ENCODE measurements at regions of chr4 and their contacts with region 1.

Region 1: GRCh38 chr4:48141048-48141447 is 7.0 kb upstream of the TXK start:
- DNase-seq: no peak
- ATAC-seq: peak; percentile 56
- H3K4me3 Mint-ChIP-seq: no peak overlapping the region
- H3K27ac Mint-ChIP-seq: no peak overlapping the region
- H3K4me1 Mint-ChIP-seq: peaks cover 28% of the 10 kb centered on the region
- H3K27me3 Mint-ChIP-seq: no peaks in the 10 kb centered on the region
- CTCF ChIP-seq: peak; percentile 68

Region 2: DNA sequence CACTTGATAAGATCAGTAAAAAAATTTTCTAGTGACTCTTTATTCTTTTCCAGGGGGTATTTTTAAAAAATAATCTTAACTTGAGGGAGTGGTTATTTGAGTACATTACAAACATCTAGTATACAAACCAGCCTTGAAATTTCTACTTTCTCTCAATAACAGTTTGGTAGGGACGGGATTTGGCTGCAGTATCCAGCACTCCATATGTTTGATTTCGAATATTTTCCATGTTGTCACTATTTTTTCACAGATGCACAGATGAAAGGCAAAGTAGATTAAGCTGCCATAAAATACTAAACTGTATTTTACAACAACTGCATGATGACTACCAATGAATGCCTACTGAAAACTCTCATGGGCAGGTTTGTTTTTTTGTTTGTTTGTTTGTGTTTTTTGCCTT is 1457.0 kb before region 1 on chr4:
- CTCF ChIA-PET with region 1: no interaction called
- POLR2A ChIA-PET with region 1: no interaction called
- intact Hi-C with region 1: no loop called
- DNase-seq: no peak
- ATAC-seq: no peak
- H3K4me3 Mint-ChIP-seq: no peak overlapping the region
- H3K27ac Mint-ChIP-seq: no peak overlapping the region
- H3K4me1 Mint-ChIP-seq: no peaks in the 10 kb centered on the region
- H3K27me3 Mint-ChIP-seq: no peaks in the 10 kb centered on the region
- CTCF ChIP-seq: no peak

Region 3: GRCh38 chr4:47668810-47669408 is 472.1 kb before region 1 on chr4:
- CTCF ChIA-PET with region 1: no interaction called
- POLR2A ChIA-PET with region 1: no interaction called
- intact Hi-C with region 1: loop called (anchors 5 kb)
- DNase-seq: no peak
- ATAC-seq: peak; percentile 54
- H3K4me3 Mint-ChIP-seq: no peak overlapping the region
- H3K27ac Mint-ChIP-seq: no peak overlapping the region
- H3K4me1 Mint-ChIP-seq: no peaks in the 10 kb centered on the region
- H3K27me3 Mint-ChIP-seq: peaks cover 7% of the 10 kb centered on the region
- CTCF ChIP-seq: peak; percentile 32

Region 4: DNA sequence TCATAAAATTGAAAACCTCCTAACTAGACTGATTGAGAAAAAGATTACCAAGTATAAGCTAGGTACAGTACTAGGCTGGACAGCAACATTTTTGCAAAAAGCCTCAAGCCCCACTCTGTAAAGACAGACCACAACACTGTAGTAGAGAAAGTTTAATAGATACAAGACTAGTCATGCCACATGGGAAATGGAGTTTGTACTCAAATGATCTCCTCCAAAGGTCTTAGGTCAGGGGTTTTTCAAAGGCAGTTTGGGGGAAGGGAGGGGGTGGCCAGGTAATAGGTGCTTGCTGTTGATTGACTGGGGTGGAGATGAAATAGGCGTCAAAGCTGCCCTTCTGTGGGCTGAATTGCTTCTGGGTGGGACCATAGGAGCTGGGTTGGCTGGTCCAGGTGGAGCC is 138.8 kb before region 1 on chr4:
- CTCF ChIA-PET with region 1: no interaction called
- POLR2A ChIA-PET with region 1: no interaction called
- intact Hi-C with region 1: loop called (anchors 2 kb)
- DNase-seq: no peak
- ATAC-seq: no peak
- H3K4me3 Mint-ChIP-seq: no peak overlapping the region
- H3K27ac Mint-ChIP-seq: no peak overlapping the region
- H3K4me1 Mint-ChIP-seq: no peaks in the 10 kb centered on the region
- H3K27me3 Mint-ChIP-seq: no peaks in the 10 kb centered on the region
- CTCF ChIP-seq: no peak

Region 5: DNA sequence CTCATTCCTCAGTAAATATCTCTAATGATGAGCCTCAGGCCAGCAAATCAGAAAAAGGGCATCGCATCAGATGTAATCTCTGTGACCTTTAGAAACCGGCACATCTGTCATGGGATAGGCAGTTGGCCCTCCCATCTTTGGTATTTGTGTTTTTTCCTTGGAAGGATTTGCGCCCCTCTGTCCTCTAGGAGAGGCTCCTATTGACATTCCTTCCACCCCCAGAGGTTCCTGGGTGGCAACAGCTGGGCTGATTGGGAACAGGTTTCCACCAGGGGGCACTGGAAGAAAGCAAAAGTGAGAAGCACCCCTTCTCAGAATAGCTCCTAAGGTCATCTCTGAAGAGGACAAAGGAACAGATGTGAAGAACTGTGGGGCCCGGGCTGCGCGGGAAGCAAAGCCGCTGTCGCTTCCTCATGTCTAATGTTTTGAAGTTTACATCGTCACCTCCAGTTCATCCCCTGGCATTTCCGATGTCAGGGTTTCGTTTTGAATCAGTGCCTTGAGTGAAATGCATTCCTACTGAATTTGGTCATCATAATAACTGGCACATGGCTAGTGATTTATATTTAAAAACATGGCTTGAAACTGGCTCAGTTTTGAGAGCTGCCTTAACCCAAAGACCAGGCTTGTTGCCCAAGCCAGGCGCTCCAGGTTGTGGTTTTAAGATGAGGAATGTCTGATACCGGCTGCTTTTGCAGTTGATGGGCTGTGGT is 13.2 kb before region 1 on chr4:
- CTCF ChIA-PET with region 1: interaction called, 22 read pairs
- POLR2A ChIA-PET with region 1: no interaction called
- intact Hi-C with region 1: loop called (anchors 1 kb)
- DNase-seq: peak; percentile 19
- ATAC-seq: peak; percentile 74
- H3K4me3 Mint-ChIP-seq: peak overlapping the region; percentile 2
- H3K27ac Mint-ChIP-seq: no peak overlapping the region
- H3K4me1 Mint-ChIP-seq: peaks cover 10% of the 10 kb centered on the region
- H3K27me3 Mint-ChIP-seq: no peaks in the 10 kb centered on the region
- CTCF ChIP-seq: no peak

Region 6: DNA sequence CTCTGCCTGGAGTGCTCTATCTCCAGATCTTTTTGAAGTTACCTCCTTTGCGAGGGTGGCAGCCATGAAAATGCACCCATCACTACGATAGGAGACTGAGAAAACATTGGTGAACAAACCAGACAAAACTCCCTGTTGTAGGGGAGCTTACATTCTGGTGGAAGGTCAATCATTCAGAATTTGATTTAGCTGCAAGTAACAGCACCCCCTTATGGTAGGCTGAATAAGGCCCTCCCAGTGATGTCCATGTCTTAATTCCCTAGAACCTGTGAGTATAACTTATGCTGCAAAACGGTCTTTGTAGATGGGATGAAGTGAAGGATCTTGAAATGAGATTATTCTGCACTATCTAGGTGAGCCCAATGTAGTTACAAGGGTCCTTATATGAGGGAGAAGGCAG is 134.2 kb after region 1 on chr4:
- CTCF ChIA-PET with region 1: interaction called, 7 read pairs
- POLR2A ChIA-PET with region 1: no interaction called
- intact Hi-C with region 1: loop called (anchors 1 kb)
- DNase-seq: no peak
- ATAC-seq: peak; percentile 45
- H3K4me3 Mint-ChIP-seq: no peak overlapping the region
- H3K27ac Mint-ChIP-seq: no peak overlapping the region
- H3K4me1 Mint-ChIP-seq: peaks cover 15% of the 10 kb centered on the region
- H3K27me3 Mint-ChIP-seq: no peaks in the 10 kb centered on the region
- CTCF ChIP-seq: no peak

Measured in activated B cell treated with CpG ODN at 0.5 μM for 24 hours (primary cell).